ENCODE measurements at regions of chr9 and their contacts with region 1.

Region 1: DNA sequence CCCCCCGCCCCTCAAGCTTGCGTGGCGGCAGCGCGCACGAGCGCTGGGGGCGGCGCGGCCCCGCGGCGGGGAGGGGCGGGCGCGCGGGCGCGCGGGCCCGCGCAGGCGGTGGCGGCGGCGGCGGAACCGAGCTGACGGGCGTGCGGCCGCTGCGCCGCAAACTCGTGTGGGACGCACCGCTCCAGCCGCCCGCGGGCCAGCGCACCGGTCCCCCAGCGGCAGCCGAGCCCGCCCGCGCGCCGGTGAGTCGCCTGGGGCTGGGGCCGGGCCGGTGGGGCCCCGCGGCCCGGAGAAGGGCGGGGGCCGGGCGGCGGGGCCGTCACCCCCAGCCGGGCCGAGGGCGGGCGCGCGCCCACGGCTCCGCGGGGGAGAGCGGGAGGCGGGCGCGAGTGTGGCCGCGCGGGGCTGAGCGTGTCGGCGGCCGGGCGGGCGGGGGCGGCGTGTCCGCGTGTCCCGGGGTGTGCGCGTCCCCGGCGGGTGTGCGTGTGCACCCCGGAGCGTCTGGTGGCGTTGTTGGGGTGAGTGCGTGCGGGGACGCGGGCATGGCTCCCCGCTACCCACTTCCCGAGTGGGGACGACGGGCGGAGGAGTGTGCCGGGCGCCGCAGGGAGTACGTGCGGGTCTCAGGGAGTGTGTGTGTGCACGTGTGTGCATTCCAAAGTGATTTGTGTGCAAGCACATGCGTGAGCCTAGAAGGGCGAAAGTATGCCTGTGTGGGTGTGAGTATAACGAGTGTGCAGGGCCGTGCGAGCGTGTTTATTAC is at the start of gene NEK6:
- DNase-seq: peak in 2 of 3 donors; percentile 80 to 81
- ATAC-seq: peak; percentile 55 to 58
- H3K4me3 ChIP-seq: peak within 1 kb of the TSS; percentile 95
- H3K27ac ChIP-seq: peak within 1 kb of the TSS; percentile 92
- H3K4me1 ChIP-seq: peaks cover 19% of the 10 kb centered on the region
- H3K27me3 ChIP-seq: no peaks in the 10 kb centered on the region
- total RNA-seq, gene NEK6: 12.0 to 19.2 (median 15.6) TPM

Region 2: DNA sequence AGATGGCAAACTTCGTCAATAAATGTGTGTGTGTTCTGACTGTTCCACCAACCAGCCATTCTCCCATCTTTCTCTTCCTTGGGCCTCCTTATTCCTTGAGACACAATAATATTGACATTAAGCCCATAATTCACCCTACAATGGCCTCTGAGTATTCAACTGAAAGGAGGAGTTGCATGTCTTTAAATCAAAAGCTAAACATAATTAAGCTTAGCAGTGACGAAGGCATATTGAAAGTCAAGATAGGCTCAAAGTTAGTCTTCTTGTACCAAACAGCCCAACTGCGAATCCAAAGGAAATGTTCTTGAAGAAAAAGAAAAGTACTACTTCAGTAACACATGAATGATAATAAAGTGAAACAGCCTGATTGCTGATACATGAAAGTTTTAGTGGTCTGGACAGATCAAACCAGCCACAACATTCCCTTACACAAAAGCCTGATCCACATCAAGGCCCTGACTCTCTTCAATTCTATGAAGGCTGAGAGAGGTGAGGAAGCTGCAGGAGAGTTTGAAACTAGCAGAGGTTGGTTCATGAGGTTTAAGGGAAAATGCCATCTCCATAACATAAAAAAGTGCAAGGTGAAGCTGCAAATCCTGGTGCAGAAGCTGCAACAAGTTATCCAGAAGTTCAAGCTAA is 409.5 kb before region 1 on chr9:
- intact Hi-C with region 1: no loop called
- DNase-seq: no peak
- ATAC-seq: no peak
- H3K4me3 ChIP-seq: no peak overlapping the region
- H3K27ac ChIP-seq: no peak overlapping the region
- H3K4me1 ChIP-seq: no peaks in the 10 kb centered on the region
- H3K27me3 ChIP-seq: no peaks in the 10 kb centered on the region

Region 3: GRCh38 chr9:124210697-124211096 is 47.3 kb before region 1 on chr9:
- intact Hi-C with region 1: no loop called
- DNase-seq: no peak
- ATAC-seq: no peak
- H3K4me3 ChIP-seq: no peak overlapping the region
- H3K27ac ChIP-seq: no peak overlapping the region
- H3K4me1 ChIP-seq: peaks cover 6% of the 10 kb centered on the region
- H3K27me3 ChIP-seq: no peaks in the 10 kb centered on the region

Region 4: DNA sequence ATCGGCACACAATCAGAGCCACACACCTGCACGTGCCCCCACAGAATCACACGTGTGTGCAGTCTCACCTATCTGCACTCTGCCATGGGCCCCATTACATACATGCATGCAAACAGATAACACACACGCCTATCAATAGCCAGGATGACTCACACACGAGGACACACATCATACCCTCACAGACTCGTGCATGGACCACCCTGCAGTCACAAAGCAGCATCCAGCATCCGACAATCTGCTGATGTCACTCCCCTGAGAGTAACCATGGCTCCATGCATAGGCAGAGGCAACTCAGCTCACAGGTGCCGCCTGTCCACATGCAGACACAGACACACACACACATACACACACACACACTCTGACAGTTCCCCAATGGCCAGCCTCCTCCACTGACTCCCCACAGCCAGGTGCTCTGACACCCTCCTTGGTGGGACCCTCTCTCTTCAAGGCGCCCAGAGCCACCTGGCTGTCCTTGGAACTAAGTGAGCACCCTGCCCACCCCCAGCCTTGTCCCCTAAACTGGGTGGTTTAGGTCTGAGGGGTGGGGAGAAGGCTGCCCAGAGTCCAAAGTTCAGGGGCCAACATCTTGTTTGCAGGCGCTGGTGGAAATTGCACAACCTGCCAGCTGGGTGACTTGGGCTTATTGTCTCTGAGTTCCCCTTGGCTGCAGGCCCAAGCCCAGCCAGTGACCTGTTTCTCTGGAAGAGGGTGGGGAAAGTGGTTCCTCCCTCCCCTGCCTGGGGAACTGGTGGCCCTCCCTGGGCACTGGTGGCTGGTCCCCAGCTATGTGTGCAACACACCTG is 34.9 kb before region 1 on chr9:
- intact Hi-C with region 1: loop called in 1 of 4 experiments (anchors 5 kb)
- DNase-seq: peak; percentile 86 to 92 (median 89)
- ATAC-seq: peak; percentile 72 to 90
- H3K4me3 ChIP-seq: no peak overlapping the region
- H3K27ac ChIP-seq: no peak overlapping the region
- H3K4me1 ChIP-seq: peaks cover 18% of the 10 kb centered on the region
- H3K27me3 ChIP-seq: no peaks in the 10 kb centered on the region